ENCODE measurements at regions of chr10 and their contacts with region 1.

Region 1: GRCh38 chr10:96880575-96880974 is 48.5 kb downstream of the LCOR start:
- DNase-seq: no peak
- ATAC-seq: no peak
- H3K4me3 ChIP-seq: no peak overlapping the region
- H3K4me3 Mint-ChIP-seq: no peak overlapping the region
- H3K27ac ChIP-seq: no peak overlapping the region
- H3K27ac Mint-ChIP-seq: no peak overlapping the region
- H3K4me1 ChIP-seq: no peaks in the 10 kb centered on the region
- H3K4me1 Mint-ChIP-seq: peaks cover 72% of the 10 kb centered on the region
- H3K27me3 ChIP-seq: no peaks in the 10 kb centered on the region
- H3K27me3 Mint-ChIP-seq: no peaks in the 10 kb centered on the region
- CTCF ChIP-seq: no peak

Region 2: GRCh38 chr10:96082153-96082552 is 798.4 kb before region 1 on chr10:
- CTCF ChIA-PET with region 1: no interaction called
- POLR2A ChIA-PET with region 1: no interaction called
- intact Hi-C with region 1: no loop called
- DNase-seq: no peak
- ATAC-seq: no peak
- H3K4me3 ChIP-seq: no peak overlapping the region
- H3K4me3 Mint-ChIP-seq: no peak overlapping the region
- H3K27ac ChIP-seq: no peak overlapping the region
- H3K27ac Mint-ChIP-seq: no peak overlapping the region
- H3K4me1 ChIP-seq: no peaks in the 10 kb centered on the region
- H3K4me1 Mint-ChIP-seq: no peaks in the 10 kb centered on the region
- H3K27me3 ChIP-seq: no peaks in the 10 kb centered on the region
- H3K27me3 Mint-ChIP-seq: no peaks in the 10 kb centered on the region
- CTCF ChIP-seq: no peak

Region 3: DNA sequence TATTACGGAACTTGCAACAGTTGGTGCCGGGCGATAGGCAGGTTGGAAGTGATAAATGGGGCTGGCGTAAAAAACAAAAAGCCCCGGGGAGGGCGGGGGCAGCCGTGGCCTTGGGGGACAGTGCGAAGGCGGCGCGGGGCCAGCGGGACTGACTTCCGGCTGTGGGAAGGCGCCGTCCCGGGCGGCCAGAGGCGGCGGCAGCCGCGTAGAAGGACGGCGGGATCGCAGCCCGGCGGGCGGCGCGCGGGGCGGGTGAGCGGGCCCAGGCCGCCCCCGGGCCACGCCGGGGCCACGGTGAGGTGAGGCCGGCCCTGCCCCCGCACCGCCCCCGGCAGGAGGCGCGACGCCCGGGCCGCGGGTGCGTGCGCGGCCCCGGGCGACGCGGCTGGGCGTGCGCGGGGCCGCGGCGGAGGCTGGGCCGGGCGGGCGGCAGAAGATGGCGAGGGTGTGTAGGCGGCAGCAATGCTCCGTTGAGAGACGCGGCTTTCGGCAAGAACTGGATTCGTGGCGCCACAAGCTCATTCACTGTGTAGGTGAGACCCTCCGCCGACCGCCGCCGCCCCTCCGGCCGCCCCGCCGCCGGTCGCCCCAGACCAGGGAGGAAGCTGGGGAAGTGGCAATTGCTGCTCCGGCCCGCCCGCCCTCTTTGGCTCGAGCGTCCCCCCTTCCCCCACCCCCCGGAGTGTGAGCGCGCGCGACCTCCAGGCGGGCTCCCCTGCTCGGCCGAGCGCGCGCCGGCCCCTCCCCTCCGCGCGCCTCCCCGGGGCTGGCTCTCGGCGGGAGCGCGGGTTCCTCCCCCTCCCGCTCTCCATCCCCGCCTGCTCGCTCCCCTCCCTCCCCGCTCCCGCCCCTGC is 48.5 kb before region 1 on chr10 and contains the start of gene LCOR:
- CTCF ChIA-PET with region 1: no interaction called
- POLR2A ChIA-PET with region 1: no interaction called
- intact Hi-C with region 1: no loop called
- DNase-seq: peak; percentile 62 to 94 (median 78)
- ATAC-seq: peak; percentile 65
- H3K4me3 ChIP-seq: peak within 1 kb of the TSS; percentile 71
- H3K4me3 Mint-ChIP-seq: peak within 1 kb of the TSS; percentile 94
- H3K27ac ChIP-seq: peak within 1 kb of the TSS; percentile 78 to 80
- H3K27ac Mint-ChIP-seq: peak within 1 kb of the TSS; percentile 94
- H3K4me1 ChIP-seq: peaks cover 12% of the 10 kb centered on the region
- H3K4me1 Mint-ChIP-seq: peaks cover 54% of the 10 kb centered on the region
- H3K27me3 ChIP-seq: no peaks in the 10 kb centered on the region
- H3K27me3 Mint-ChIP-seq: no peaks in the 10 kb centered on the region
- CTCF ChIP-seq: no peak
- total RNA-seq, gene LCOR: 46.0 to 56.0 TPM

Region 4: DNA sequence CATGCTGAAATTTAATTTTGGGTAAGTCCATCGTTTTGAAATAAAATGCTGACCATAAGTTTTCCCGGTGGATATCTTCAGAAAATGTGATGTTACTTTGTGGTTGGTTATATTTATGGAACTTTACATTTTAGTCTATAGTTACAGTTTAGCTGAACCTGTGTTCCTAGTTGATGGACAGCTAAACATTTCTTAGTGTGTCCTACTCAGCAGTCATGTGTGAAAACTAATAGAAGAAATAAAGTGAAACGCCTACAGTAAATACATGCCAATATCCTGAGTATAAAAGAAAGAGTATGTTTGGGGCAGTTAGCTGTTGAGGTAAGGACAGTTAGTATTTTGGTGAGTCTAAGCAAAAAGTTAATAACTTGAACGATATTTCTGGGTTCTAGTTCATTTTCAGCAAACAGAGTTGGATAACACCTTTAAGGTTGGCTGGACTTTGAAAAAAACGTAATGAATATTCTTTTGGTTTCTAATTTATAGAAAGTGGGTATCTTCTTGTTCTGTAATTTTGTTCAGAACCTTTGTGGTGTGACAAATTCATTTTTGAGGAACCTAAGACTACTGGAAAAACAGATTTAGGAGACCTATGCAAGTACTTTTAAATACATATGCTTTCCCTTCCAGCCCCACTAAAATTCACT is 19.8 kb before region 1 on chr10:
- CTCF ChIA-PET with region 1: no interaction called
- POLR2A ChIA-PET with region 1: no interaction called
- intact Hi-C with region 1: loop called in 1 of 2 experiments (anchors 2 kb)
- DNase-seq: no peak
- ATAC-seq: no peak
- H3K4me3 ChIP-seq: no peak overlapping the region
- H3K4me3 Mint-ChIP-seq: no peak overlapping the region
- H3K27ac ChIP-seq: no peak overlapping the region
- H3K27ac Mint-ChIP-seq: peak overlapping the region; percentile 29
- H3K4me1 ChIP-seq: peaks cover 7% of the 10 kb centered on the region
- H3K4me1 Mint-ChIP-seq: peaks cover 86% of the 10 kb centered on the region
- H3K27me3 ChIP-seq: no peaks in the 10 kb centered on the region
- H3K27me3 Mint-ChIP-seq: no peaks in the 10 kb centered on the region
- CTCF ChIP-seq: no peak

Region 5: DNA sequence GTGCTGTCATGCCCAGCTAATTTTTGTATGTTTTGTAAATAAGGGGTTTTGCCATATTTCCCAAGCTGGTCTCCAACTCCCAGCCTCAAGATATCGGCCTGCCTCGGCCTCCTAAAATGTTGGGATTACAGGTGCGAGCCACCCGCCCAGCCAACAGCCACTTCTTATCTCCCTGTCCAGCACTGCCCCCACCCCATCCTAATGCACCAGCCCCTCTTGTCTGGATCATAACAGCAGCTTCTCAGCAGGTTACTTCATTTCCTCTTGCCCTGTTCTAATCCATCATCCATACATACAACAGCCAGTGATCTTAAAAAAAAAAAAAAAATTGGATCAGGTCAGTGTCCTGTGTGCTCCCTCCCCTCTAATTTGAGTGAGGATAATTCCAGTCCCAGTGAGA is 466.7 kb after region 1 on chr10:
- CTCF ChIA-PET with region 1: no interaction called
- POLR2A ChIA-PET with region 1: no interaction called
- intact Hi-C with region 1: no loop called
- DNase-seq: no peak
- ATAC-seq: no peak
- H3K4me3 ChIP-seq: no peak overlapping the region
- H3K4me3 Mint-ChIP-seq: no peak overlapping the region
- H3K27ac ChIP-seq: no peak overlapping the region
- H3K27ac Mint-ChIP-seq: no peak overlapping the region
- H3K4me1 ChIP-seq: no peaks in the 10 kb centered on the region
- H3K4me1 Mint-ChIP-seq: no peaks in the 10 kb centered on the region
- H3K27me3 ChIP-seq: no peaks in the 10 kb centered on the region
- H3K27me3 Mint-ChIP-seq: no peaks in the 10 kb centered on the region
- CTCF ChIP-seq: no peak

Measured in CD4-positive, alpha-beta T cell (primary cell).